Right cardiac atrium (tissue), 5 donors: ENCODE measurements at regions of chr1 and their contacts with region 1.

Region 1: GRCh38 chr1:19390901-19391595 is 78.9 kb downstream of the SLC66A1 start:
- DNase-seq: peak; percentile 42 to 82 (median 75)
- ATAC-seq: peak in 1 of 2 donors; percentile 28
- H3K4me3 ChIP-seq: peak overlapping the region; percentile 7
- H3K27ac ChIP-seq: peak overlapping the region; percentile 70
- H3K4me1 ChIP-seq: peaks cover 12% of the 10 kb centered on the region
- H3K27me3 ChIP-seq: no peaks in the 10 kb centered on the region

Region 2: GRCh38 chr1:19477284-19478249 is 86.5 kb after region 1 on chr1:
- intact Hi-C with region 1: loop called in 3 of 4 experiments (anchors 10 kb)
- DNase-seq: peak in 2 of 3 donors; percentile 26 to 61
- ATAC-seq: peak; percentile 42 to 63
- H3K4me3 ChIP-seq: no peak overlapping the region
- H3K27ac ChIP-seq: peak overlapping the region; percentile 23
- H3K4me1 ChIP-seq: peaks cover 42% of the 10 kb centered on the region
- H3K27me3 ChIP-seq: no peaks in the 10 kb centered on the region

Region 3: GRCh38 chr1:19643602-19644394 is 252.8 kb after region 1 on chr1 and contains the start of gene NBL1:
- intact Hi-C with region 1: loop called in 1 of 4 experiments (anchors 5 kb)
- DNase-seq: peak; percentile 80 to 93 (median 92)
- ATAC-seq: peak; percentile 76 to 86
- H3K4me3 ChIP-seq: peak within 1 kb of the TSS; percentile 87
- H3K27ac ChIP-seq: peak within 1 kb of the TSS; percentile 71
- H3K4me1 ChIP-seq: peaks cover 2% of the 10 kb centered on the region
- H3K27me3 ChIP-seq: no peaks in the 10 kb centered on the region
- total RNA-seq, gene NBL1: 40.7 to 64.8 (median 46.1) TPM